ENCODE measurements at regions of chr22 and their contacts with region 1.

Region 1: DNA sequence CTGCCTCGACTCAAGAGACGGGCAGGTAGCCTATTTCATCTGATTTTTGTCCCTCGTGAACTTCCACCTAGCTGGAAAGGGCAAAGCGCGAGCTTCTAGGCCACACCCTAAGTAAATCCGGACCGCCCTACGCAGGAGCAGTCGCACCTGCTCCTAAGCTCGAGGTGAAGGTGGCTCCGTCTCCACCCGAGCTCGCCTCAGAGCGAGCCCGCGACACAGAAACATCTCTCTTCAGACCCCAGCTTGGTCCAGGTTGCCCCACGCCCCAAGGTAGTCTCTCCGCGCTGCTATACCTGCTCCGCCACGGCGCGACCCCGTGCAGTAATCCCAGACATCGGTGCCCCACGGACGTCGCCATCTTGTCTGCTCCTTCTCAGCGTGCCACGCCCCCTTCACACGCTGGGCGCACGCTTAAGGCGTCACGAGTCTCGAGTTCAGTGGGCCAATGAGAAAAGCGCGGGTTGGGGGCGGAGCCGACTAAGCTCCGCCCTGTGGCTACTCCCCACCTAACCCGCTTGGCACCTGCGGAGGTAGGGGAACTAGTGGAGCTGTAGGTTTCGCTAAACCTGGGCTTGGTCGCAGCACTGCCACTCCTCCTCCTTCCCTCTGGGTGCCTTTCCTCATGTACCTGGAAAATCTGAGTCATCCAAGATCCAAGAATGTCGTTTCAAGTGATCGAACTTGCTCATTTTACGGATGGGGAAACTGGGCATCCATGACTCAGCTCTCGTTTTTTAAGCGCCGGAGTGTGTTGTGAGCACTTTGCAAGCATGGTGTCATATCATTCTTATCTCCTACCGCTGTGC is at the start of gene PISD:
- DNase-seq: no peak
- H3K4me3 ChIP-seq: peak within 1 kb of the TSS; percentile 98
- CTCF ChIP-seq: no peak

Region 2: DNA sequence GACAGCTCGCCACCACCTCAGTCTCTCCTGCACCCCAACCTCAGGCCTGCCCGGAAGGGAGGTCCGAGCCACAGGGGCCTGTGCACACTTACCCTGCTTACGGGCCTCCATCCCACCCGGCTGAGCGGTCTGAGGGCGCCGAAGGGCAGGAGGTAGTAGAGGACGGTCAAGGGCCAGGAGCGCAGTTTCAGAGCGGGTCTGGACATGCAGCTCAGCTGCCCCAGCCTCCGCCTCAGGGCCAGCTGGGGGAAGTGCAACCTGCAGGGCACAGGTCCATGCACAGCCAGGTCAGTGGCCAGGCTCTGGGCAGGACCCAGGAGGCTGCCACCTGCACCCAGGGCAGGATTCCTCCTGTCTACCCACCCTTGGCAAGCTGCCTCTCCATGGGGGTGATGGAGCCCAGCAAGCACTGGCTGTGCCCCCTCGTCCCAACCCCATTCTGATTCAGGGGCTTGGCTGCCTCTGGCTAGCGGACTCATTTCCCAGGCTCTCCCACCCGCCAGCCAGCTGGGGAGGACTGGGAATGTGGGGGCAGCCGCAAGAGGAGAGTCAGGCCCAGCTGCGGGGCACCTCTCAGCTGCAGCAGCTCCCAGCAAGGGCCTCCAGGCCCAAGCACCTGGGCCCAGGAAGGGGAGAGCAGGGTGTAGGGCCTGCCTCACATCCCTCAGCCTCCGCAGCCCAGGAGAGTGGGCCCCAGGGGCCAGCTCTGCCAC is 38.3 kb before region 1 on chr22:
- CTCF ChIA-PET with region 1: no interaction called
- POLR2A ChIA-PET with region 1: no interaction called
- DNase-seq: no peak
- H3K4me3 ChIP-seq: no peak overlapping the region
- CTCF ChIP-seq: no peak

Region 3: GRCh38 chr22:31749636-31750364 is 87.7 kb after region 1 on chr22 and contains the start of gene PRR14L:
- CTCF ChIA-PET with region 1: interaction called, 20 read pairs
- POLR2A ChIA-PET with region 1: interaction called, 4 read pairs
- DNase-seq: peak; percentile 34
- H3K4me3 ChIP-seq: peak within 1 kb of the TSS; percentile 85
- CTCF ChIP-seq: peak; percentile 8

Region 4: GRCh38 chr22:31944700-31945474 is 282.8 kb after region 1 on chr22:
- CTCF ChIA-PET with region 1: interaction called, 20 read pairs
- POLR2A ChIA-PET with region 1: no interaction called
- DNase-seq: no peak
- H3K4me3 ChIP-seq: peak overlapping the region; percentile 78
- CTCF ChIP-seq: no peak

Region 5: GRCh38 chr22:31962392-31963125 is 300.5 kb after region 1 on chr22:
- CTCF ChIA-PET with region 1: interaction called, 80 read pairs
- POLR2A ChIA-PET with region 1: no interaction called
- DNase-seq: no peak
- H3K4me3 ChIP-seq: no peak overlapping the region
- CTCF ChIP-seq: no peak